GM12878 (cell line): ENCODE measurements at regions of chr10 and their contacts with region 1.

Region 1: DNA sequence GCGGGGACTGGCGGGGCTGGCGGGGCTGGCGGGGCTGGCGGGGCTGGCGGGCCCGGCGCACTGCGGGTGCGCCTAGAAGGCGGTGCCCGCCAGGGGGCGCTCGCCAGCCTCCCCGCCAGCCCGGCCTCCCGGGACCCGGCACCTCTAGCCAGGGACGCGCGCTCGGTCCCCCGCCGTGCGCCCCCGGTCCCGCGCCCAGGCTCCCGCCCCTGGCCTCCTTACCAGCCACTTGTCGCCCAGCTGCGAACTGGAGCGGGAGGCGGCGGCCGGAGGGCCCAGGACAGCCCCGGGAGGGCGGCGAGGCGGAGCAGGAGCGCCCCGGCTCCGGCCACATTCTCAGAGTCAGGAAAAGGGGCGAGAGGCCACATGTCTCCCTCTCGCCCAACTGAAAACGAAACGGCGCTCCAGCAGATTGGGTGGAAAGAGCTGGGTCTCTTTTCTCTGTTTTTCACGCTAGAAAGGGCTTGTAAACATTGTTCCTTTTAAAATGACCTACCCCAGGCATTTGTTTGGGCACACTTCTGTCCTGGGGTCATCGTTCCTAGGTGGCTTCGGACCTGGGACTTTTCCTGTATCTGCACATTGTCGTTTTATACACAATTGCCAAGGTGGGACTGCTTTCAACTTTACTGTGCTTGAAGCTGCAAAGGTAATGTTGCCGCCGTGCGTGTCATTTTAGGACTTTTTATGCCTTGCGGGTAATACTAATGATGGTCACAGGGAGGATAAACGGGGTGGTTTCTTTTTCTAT is 378 bp upstream of the PRKCQ start:
- DNase-seq: no peak
- ATAC-seq: peak; percentile 94
- H3K4me3 ChIP-seq: peak overlapping the region; percentile 37
- H3K27ac ChIP-seq: no peak overlapping the region
- H3K4me1 ChIP-seq: no peaks in the 10 kb centered on the region
- H3K27me3 ChIP-seq: peaks cover 3 to 5% of the 10 kb centered on the region in 2 experiments
- CTCF ChIP-seq: peak; percentile 25 to 61 (median 52); a peak in 4 of 6 replicates
- EP300 ChIP-seq: no peak
- POLR2A ChIP-seq: no peak
- RAD21 ChIP-seq: peak; percentile 15; the same call in 1 of the 2 replicates

Region 2: GRCh38 chr10:6416892-6417512 is 163.5 kb before region 1 on chr10:
- CTCF ChIA-PET with region 1: interaction called, 5 read pairs
- POLR2A ChIA-PET with region 1: no interaction called
- RAD21 ChIA-PET with region 1: interaction called, 4 read pairs
- SMC1A ChIA-PET with region 1: interaction called, 3 read pairs
- in situ Hi-C with region 1: no loop called
- intact Hi-C with region 1: loop called (anchors 5 kb)
- DNase-seq: no peak
- ATAC-seq: peak; percentile 83
- H3K4me3 ChIP-seq: no peak overlapping the region
- H3K27ac ChIP-seq: no peak overlapping the region
- H3K4me1 ChIP-seq: no peaks in the 10 kb centered on the region
- H3K27me3 ChIP-seq: no peaks in the 10 kb centered on the region; a peak in 2 of 4 replicates
- CTCF ChIP-seq: peak; percentile 65 to 82 (median 68)
- EP300 ChIP-seq: no peak
- POLR2A ChIP-seq: no peak
- RAD21 ChIP-seq: peak; percentile 87

Region 3: DNA sequence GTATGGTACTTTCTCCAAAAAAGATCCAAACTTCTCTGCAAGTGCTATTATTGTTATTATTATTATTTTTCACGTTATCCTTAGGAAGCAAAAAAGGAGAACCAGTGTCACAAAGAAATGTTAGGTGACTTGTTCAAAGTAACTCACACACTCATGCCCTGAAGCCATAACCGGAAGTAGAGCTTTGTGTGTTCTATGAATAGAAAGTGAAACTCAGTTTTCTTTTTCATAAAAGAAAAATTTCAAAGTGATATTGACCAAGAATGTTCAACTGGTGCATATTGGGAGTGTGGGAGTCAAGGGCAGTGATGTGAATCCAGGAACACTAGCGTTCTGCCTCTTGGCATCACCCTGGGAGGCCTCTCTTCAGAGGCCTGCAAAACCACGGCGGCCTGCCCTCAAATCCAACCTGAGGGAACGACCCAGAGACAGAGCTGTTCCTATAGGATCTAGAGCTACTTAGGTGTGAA is 106.5 kb before region 1 on chr10:
- CTCF ChIA-PET with region 1: interaction called, 8 read pairs
- POLR2A ChIA-PET with region 1: interaction called, 3 read pairs
- RAD21 ChIA-PET with region 1: interaction called, 11 read pairs
- SMC1A ChIA-PET with region 1: interaction called, 11 read pairs
- in situ Hi-C with region 1: no loop called
- intact Hi-C with region 1: no loop called
- DNase-seq: peak; percentile 11
- ATAC-seq: peak; percentile 78
- H3K4me3 ChIP-seq: 0 out of 2 replicates have a peak overlapping the region, but pooled peaks have one; percentile 28
- H3K27ac ChIP-seq: peak overlapping the region; percentile 57
- H3K4me1 ChIP-seq: peaks cover 15% of the 10 kb centered on the region
- H3K27me3 ChIP-seq: no peaks in the 10 kb centered on the region
- CTCF ChIP-seq: no peak
- EP300 ChIP-seq: no peak
- POLR2A ChIP-seq: no peak
- RAD21 ChIP-seq: no peak

Region 4: DNA sequence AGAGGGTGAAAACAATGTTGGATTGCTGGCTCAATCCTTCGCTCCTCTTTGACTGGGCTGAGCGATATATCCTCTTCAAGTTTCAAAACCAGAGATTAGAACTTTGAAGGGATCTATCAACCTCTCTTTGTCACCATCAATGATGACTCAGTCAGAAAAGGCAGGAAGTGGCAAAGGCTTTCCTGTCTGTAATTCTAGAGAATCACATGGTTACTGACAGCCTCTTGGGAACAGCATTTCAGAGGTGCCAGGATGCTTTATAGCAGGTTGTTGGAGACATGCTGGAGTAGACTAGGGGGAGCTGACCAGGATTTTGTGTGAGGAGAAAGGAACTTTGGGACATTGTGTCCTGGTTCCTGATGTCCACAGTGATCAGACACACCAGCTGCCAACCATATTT is 81.7 kb before region 1 on chr10:
- CTCF ChIA-PET with region 1: interaction called, 4 read pairs
- POLR2A ChIA-PET with region 1: interaction called, 3 read pairs
- RAD21 ChIA-PET with region 1: interaction called, 4 read pairs
- SMC1A ChIA-PET with region 1: interaction called, 12 read pairs
- in situ Hi-C with region 1: no loop called
- intact Hi-C with region 1: no loop called
- DNase-seq: no peak
- ATAC-seq: no peak
- H3K4me3 ChIP-seq: no peak overlapping the region
- H3K27ac ChIP-seq: no peak overlapping the region
- H3K4me1 ChIP-seq: no peaks in the 10 kb centered on the region
- H3K27me3 ChIP-seq: peaks cover 0 to 2% of the 10 kb centered on the region in 2 experiments; a peak in 2 of 4 replicates
- CTCF ChIP-seq: no peak
- EP300 ChIP-seq: no peak
- POLR2A ChIP-seq: no peak
- RAD21 ChIP-seq: no peak

Region 5: DNA sequence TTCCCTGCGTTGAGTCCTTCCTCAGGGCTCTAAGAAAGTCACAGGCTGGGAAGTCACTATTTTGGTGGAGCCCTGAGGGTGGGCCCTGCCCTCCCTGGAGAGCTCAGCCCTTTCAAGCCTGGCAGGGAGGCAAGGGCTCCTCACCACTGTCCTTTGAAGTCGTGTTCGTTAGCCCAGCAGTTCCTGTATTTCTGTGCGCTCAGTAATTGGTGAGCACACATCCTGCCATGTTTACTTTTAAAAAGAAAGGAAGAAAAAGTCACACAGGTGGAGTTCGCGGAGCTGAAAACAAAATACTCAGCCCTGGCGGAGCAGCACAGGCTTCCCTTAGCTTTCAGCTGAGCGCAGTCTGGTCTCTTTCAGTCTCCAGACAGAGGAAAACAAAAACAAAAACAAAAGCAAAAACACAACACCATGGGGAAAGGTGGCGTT is 37.4 kb before region 1 on chr10:
- CTCF ChIA-PET with region 1: interaction called, 7 read pairs
- POLR2A ChIA-PET with region 1: interaction called, 6 read pairs
- RAD21 ChIA-PET with region 1: interaction called, 13 read pairs
- SMC1A ChIA-PET with region 1: interaction called, 5 read pairs
- in situ Hi-C with region 1: no loop called
- intact Hi-C with region 1: no loop called
- DNase-seq: no peak
- ATAC-seq: peak; percentile 73
- H3K4me3 ChIP-seq: no peak overlapping the region
- H3K27ac ChIP-seq: no peak overlapping the region
- H3K4me1 ChIP-seq: peaks cover 6% of the 10 kb centered on the region
- H3K27me3 ChIP-seq: peaks cover under 1% of the 10 kb centered on the region in 2 experiments; a peak in 2 of 4 replicates
- CTCF ChIP-seq: no peak
- EP300 ChIP-seq: no peak
- POLR2A ChIP-seq: no peak
- RAD21 ChIP-seq: no peak

Region 6: GRCh38 chr10:6593241-6593671 is 12.8 kb after region 1 on chr10:
- CTCF ChIA-PET with region 1: interaction called, 12 read pairs
- POLR2A ChIA-PET with region 1: interaction called, 3 read pairs
- RAD21 ChIA-PET with region 1: interaction called, 11 read pairs
- SMC1A ChIA-PET with region 1: interaction called, 14 read pairs
- in situ Hi-C with region 1: no loop called
- intact Hi-C with region 1: no loop called
- DNase-seq: no peak
- ATAC-seq: no peak
- H3K4me3 ChIP-seq: no peak overlapping the region
- H3K27ac ChIP-seq: no peak overlapping the region
- H3K4me1 ChIP-seq: no peaks in the 10 kb centered on the region
- H3K27me3 ChIP-seq: no peaks in the 10 kb centered on the region; a peak in 1 of 4 replicates
- CTCF ChIP-seq: no peak
- EP300 ChIP-seq: no peak
- POLR2A ChIP-seq: no peak
- RAD21 ChIP-seq: no peak

Region 7: DNA sequence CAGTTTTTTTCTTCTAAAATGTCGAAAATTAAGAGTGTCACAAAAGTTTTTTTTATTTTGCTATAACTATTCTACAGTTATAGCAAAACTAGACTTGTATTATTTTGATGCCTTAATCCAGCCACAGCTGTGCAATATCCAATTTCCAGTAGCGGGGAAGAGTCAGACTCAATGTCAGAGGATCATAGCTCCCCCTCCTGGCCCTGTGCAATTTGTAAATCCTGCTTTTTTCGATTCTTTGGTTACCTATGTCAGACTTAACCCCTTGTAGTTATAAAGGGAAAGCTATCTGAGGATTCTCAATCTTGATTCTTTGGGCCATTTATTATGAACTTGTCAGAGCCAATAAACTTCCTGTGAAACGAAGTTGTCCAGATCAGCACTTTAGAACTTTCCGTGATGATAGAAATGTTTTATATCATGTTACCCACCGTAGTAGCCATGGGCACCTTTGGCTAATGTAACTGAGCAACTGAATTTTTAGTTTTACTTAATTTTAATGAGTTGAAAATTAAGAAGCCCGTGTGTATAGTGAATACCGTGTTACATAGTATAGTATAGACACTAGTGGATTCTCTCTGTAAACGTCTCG is 87.3 kb after region 1 on chr10:
- CTCF ChIA-PET with region 1: interaction called, 7 read pairs
- POLR2A ChIA-PET with region 1: no interaction called
- RAD21 ChIA-PET with region 1: interaction called, 5 read pairs
- SMC1A ChIA-PET with region 1: interaction called, 5 read pairs
- in situ Hi-C with region 1: no loop called
- intact Hi-C with region 1: loop called (anchors 5 kb)
- DNase-seq: no peak
- ATAC-seq: peak; percentile 36; the same call in 1 of the 3 replicates
- H3K4me3 ChIP-seq: no peak overlapping the region
- H3K27ac ChIP-seq: no peak overlapping the region
- H3K4me1 ChIP-seq: no peaks in the 10 kb centered on the region
- H3K27me3 ChIP-seq: peaks cover 0 to 1% of the 10 kb centered on the region in 2 experiments; a peak in 2 of 4 replicates
- CTCF ChIP-seq: peak; percentile 30 to 52 (median 34); a peak in 5 of 6 replicates
- EP300 ChIP-seq: no peak
- POLR2A ChIP-seq: no peak
- RAD21 ChIP-seq: peak; percentile 33; the same call in 1 of the 2 replicates

Region 8: DNA sequence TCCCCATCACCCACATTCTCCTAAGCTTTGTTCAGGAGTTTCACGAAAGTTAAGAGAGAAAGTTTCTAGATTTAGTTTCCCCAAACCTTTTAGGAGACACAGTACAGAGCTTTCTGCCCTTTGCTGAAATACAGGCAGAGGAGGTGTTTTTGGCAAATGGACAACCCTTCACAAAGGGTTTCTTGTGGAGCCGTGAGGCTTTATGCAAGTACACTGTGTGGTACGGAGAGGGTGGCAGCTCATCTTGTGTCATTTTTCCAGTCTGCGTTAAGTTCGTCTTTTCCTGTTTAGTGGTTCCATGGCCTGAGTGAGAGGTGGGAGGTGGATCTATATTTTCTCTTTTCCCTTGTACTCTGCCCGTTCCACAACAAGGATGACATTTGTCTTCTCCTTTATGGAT is 215.1 kb after region 1 on chr10:
- CTCF ChIA-PET with region 1: no interaction called
- POLR2A ChIA-PET with region 1: no interaction called
- RAD21 ChIA-PET with region 1: no interaction called
- SMC1A ChIA-PET with region 1: no interaction called
- in situ Hi-C with region 1: no loop called
- intact Hi-C with region 1: no loop called
- DNase-seq: no peak
- ATAC-seq: no peak
- H3K4me3 ChIP-seq: no peak overlapping the region
- H3K27ac ChIP-seq: no peak overlapping the region
- H3K4me1 ChIP-seq: no peaks in the 10 kb centered on the region
- H3K27me3 ChIP-seq: no peaks in the 10 kb centered on the region
- CTCF ChIP-seq: no peak
- EP300 ChIP-seq: no peak
- POLR2A ChIP-seq: no peak
- RAD21 ChIP-seq: no peak